ENCODE measurements at regions of chr17 and their contacts with region 1.

Region 1: DNA sequence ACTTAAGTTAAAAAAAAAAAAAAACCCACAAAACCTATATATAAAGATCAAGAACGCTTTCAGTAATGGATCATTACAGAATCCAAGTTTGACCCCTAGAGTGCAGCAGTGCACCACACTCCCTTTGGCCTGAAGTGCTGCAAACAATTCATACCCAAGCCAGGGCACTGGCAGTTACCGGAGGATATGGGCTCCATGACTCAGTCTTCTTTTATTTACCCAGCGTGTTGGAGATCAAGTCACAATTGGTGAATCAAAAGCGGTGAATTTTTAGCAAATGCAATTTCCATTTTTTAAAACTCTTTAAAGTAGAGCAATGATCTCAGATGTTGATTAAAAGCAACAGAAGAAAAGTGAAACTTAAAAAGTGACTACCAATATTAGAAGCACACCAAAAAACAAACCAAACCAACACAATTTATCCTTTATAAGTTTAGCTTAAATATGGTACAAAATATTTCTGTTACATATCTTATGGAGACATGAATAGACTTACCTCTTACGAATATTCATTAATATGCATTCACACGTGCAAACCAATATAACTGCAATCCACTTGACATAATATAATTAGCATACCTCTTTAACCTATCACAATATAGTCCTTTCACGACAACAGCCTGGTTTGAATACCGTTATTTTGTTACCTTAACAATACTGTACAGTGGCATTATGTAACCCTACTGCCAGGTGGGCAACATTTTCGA is 46.3 kb downstream of the ZNF652 start:
- DNase-seq: peak; percentile 78
- ATAC-seq: peak; percentile 97
- H3K4me3 ChIP-seq: no peak overlapping the region
- H3K27ac ChIP-seq: no peak overlapping the region
- H3K4me1 ChIP-seq: peaks cover 5% of the 10 kb centered on the region; the same call in 1 of the 2 replicates
- H3K27me3 ChIP-seq: no peaks in the 10 kb centered on the region
- CTCF ChIP-seq: peak; percentile 86
- EP300 ChIP-seq: no peak; a peak in 1 of 4 replicates
- POLR2A ChIP-seq: no peak
- RAD21 ChIP-seq: peak; percentile 90

Region 2: GRCh38 chr17:49365667-49366066 is 50.0 kb after region 1 on chr17:
- CTCF ChIA-PET with region 1: interaction called, 7 read pairs
- POLR2A ChIA-PET with region 1: no interaction called
- in situ Hi-C with region 1: no loop called
- intact Hi-C with region 1: loop called (anchors 1 kb)
- DNase-seq: peak; percentile 56
- ATAC-seq: peak; percentile 66
- H3K4me3 ChIP-seq: no peak overlapping the region
- H3K27ac ChIP-seq: no peak overlapping the region
- H3K4me1 ChIP-seq: peaks cover 33% of the 10 kb centered on the region
- H3K27me3 ChIP-seq: no peaks in the 10 kb centered on the region; a peak in 2 of 5 replicates
- CTCF ChIP-seq: no peak; the same call in none of the 2 replicates
- EP300 ChIP-seq: no peak
- POLR2A ChIP-seq: no peak
- RAD21 ChIP-seq: no peak

Region 3: GRCh38 chr17:49390548-49391324 is 75.0 kb after region 1 on chr17:
- CTCF ChIA-PET with region 1: interaction called, 111 read pairs
- POLR2A ChIA-PET with region 1: no interaction called
- in situ Hi-C with region 1: loop called (anchors 5 kb)
- intact Hi-C with region 1: loop called (anchors 1 kb)
- DNase-seq: peak; percentile 46
- ATAC-seq: peak; percentile 49
- H3K4me3 ChIP-seq: peak overlapping the region; percentile 38 to 66 (median 40)
- H3K27ac ChIP-seq: peak overlapping the region; percentile 6
- H3K4me1 ChIP-seq: peaks cover 56% of the 10 kb centered on the region
- H3K27me3 ChIP-seq: no peaks in the 10 kb centered on the region
- CTCF ChIP-seq: no peak
- EP300 ChIP-seq: no peak
- POLR2A ChIP-seq: peak; percentile 16 to 49; a peak in 1 of 4 replicates
- RAD21 ChIP-seq: no peak

Region 4: DNA sequence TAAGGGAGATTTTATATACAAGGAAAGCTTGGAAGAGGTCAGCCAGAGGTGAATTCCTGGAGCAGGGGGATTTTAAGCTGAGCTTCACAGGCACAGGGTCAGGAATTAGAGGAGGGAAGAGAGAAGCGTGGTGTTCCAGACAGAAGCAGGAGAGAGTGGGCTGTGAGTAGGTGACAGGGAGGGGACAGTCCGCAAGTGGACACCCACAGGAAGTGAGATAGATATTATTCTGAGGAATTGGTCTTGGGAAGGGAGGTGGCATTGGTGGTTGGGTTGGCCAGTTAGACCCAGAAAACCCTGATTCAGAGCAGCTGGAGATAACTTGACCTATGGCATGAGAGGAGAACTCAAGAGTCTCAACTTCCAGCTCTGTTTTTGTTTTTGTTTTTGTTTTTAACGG is 84.3 kb after region 1 on chr17:
- CTCF ChIA-PET with region 1: interaction called, 111 read pairs
- POLR2A ChIA-PET with region 1: no interaction called
- in situ Hi-C with region 1: loop called (anchors 5 kb)
- intact Hi-C with region 1: loop called (anchors 1 kb)
- DNase-seq: no peak
- ATAC-seq: peak; percentile 8; the same call in 2 of the 3 replicates
- H3K4me3 ChIP-seq: no peak overlapping the region
- H3K27ac ChIP-seq: no peak overlapping the region
- H3K4me1 ChIP-seq: peaks cover 17% of the 10 kb centered on the region
- H3K27me3 ChIP-seq: 0 out of 5 replicates have a peak, but pooled peaks cover 0 to 4% of the 10 kb centered on the region in 2 experiments
- CTCF ChIP-seq: no peak
- EP300 ChIP-seq: no peak
- POLR2A ChIP-seq: no peak
- RAD21 ChIP-seq: no peak

Region 5: GRCh38 chr17:49422714-49423113 is 107.0 kb after region 1 on chr17:
- CTCF ChIA-PET with region 1: no interaction called
- POLR2A ChIA-PET with region 1: no interaction called
- in situ Hi-C with region 1: no loop called
- intact Hi-C with region 1: no loop called
- DNase-seq: no peak
- ATAC-seq: no peak
- H3K4me3 ChIP-seq: no peak overlapping the region
- H3K27ac ChIP-seq: no peak overlapping the region
- H3K4me1 ChIP-seq: peaks cover 16% of the 10 kb centered on the region
- H3K27me3 ChIP-seq: peaks cover 0 to 2% of the 10 kb centered on the region in 2 experiments; a peak in 1 of 5 replicates
- CTCF ChIP-seq: no peak
- EP300 ChIP-seq: no peak
- POLR2A ChIP-seq: no peak
- RAD21 ChIP-seq: no peak